ENCODE measurements at regions of chr19 and their contacts with region 1.

Region 1: GRCh38 chr19:12064590-12065538 is at the start of gene ZNF844:
- DNase-seq: peak; percentile 59 to 83 (median 69)
- ATAC-seq: peak; percentile 84
- H3K4me3 ChIP-seq: peak within 1 kb of the TSS; percentile 66 to 71
- H3K4me3 Mint-ChIP-seq: peak within 1 kb of the TSS; percentile 89
- H3K27ac ChIP-seq: peak within 1 kb of the TSS; percentile 69 to 71
- H3K27ac Mint-ChIP-seq: peak within 1 kb of the TSS; percentile 82
- H3K4me1 ChIP-seq: peaks cover 8% of the 10 kb centered on the region
- H3K4me1 Mint-ChIP-seq: peaks cover 11% of the 10 kb centered on the region
- H3K27me3 ChIP-seq: no peaks in the 10 kb centered on the region
- H3K27me3 Mint-ChIP-seq: no peaks in the 10 kb centered on the region
- CTCF ChIP-seq: no peak
- total RNA-seq, gene ZNF844: 12.1 to 14.6 TPM

Region 2: DNA sequence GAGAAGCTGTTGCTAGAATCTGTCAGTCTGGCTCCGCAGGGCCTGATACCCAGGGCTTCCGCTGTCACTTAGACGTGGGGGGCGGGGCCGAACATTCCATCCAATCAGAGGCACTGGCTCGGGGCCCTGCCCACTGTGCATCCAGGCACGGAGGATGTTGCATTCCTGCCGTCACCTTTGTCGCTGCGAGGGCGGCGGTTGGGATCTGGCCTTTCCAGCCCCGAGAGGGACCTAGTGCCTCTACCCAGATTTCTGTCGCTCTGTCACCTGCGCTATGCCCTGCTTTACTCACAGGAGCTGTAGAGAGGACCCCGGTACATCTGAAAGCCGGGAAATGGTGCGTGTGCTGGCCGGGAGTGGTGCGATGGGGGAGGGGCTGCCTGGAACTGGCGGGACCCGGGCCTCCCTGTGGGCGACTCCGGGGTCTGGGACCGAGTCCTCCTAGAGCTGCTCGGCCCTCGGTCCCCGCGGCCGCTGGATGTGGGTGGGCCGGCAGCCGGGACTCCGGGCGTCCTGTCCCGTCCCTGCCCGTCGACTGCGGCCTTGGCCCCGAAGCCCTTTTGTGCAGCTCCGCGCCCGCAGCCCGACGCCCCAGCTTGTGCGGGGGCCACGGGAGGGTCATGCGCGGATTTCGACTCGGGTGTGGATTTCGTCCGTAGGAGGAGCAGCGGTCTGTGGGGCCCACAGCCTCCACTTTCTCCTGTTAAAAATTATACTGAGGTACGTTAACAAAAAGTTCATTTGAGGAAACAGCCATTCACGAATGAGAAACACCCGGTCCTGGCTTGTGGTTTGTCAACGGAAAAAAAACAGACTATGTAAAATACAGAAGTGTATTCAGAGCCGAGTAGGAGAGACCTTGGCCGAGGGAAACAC is 216.0 kb before region 1 on chr19 and contains the start of gene ZNF439:
- CTCF ChIA-PET with region 1: no interaction called
- POLR2A ChIA-PET with region 1: no interaction called
- intact Hi-C with region 1: no loop called
- DNase-seq: peak; percentile 76 to 93 (median 89)
- ATAC-seq: peak; percentile 100
- H3K4me3 ChIP-seq: peak within 1 kb of the TSS; percentile 67 to 78
- H3K4me3 Mint-ChIP-seq: peak within 1 kb of the TSS; percentile 94
- H3K27ac ChIP-seq: peak within 1 kb of the TSS; percentile 55 to 64
- H3K27ac Mint-ChIP-seq: peak within 1 kb of the TSS; percentile 88
- H3K4me1 ChIP-seq: peaks cover 11% of the 10 kb centered on the region
- H3K4me1 Mint-ChIP-seq: peaks cover 24% of the 10 kb centered on the region
- H3K27me3 ChIP-seq: no peaks in the 10 kb centered on the region
- H3K27me3 Mint-ChIP-seq: no peaks in the 10 kb centered on the region
- CTCF ChIP-seq: no peak
- total RNA-seq, gene ZNF439: 6.2 to 7.9 TPM

Region 3: DNA sequence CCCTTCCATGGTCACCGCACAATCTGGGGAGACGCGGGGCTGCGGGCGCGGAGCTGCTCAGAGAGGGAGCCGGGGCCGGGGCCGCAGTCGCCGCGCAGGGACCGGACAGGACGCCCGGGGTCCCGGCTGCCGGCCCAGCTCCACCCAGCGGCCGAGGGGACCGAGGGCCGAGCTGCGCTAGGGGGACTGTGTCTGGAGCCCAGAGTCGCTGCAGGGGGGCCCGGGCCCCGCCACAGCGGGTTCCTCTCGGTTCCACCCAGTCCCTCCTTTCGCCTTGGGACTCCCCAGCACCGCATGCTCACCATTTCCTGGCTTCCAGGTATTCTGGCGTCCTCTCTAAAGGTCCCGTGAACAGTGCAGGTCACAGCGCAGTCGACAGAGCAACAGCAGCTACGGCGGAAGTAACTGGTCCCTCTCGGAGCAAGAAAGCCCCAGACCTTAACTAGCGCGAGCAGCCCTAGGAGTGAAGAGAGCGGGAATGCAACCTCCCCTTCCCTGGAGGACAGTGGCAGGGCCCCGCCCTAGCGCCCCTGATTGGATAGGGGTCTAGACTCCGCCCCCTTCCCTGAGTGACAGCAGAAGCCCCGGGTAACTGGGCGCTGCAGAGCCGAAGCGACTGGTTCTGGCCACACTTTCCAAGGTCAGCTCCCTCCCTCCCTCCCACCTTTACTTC is 12.2 kb before region 1 on chr19 and contains the start of gene ZNF878:
- CTCF ChIA-PET with region 1: interaction called, 15 read pairs
- POLR2A ChIA-PET with region 1: no interaction called
- intact Hi-C with region 1: no loop called
- DNase-seq: peak in 8 of 9 experiments; percentile 19 to 65 (median 42)
- ATAC-seq: peak; percentile 72
- H3K4me3 ChIP-seq: peak within 1 kb of the TSS; percentile 59 to 75
- H3K4me3 Mint-ChIP-seq: peak within 1 kb of the TSS; percentile 84
- H3K27ac ChIP-seq: no peak within 1 kb of the TSS
- H3K27ac Mint-ChIP-seq: peak within 1 kb of the TSS; percentile 37
- H3K4me1 ChIP-seq: peaks cover 10% of the 10 kb centered on the region
- H3K4me1 Mint-ChIP-seq: peaks cover 15% of the 10 kb centered on the region
- H3K27me3 ChIP-seq: no peaks in the 10 kb centered on the region
- H3K27me3 Mint-ChIP-seq: peaks cover 12% of the 10 kb centered on the region
- CTCF ChIP-seq: no peak
- total RNA-seq, gene ZNF878: not detected

Region 4: DNA sequence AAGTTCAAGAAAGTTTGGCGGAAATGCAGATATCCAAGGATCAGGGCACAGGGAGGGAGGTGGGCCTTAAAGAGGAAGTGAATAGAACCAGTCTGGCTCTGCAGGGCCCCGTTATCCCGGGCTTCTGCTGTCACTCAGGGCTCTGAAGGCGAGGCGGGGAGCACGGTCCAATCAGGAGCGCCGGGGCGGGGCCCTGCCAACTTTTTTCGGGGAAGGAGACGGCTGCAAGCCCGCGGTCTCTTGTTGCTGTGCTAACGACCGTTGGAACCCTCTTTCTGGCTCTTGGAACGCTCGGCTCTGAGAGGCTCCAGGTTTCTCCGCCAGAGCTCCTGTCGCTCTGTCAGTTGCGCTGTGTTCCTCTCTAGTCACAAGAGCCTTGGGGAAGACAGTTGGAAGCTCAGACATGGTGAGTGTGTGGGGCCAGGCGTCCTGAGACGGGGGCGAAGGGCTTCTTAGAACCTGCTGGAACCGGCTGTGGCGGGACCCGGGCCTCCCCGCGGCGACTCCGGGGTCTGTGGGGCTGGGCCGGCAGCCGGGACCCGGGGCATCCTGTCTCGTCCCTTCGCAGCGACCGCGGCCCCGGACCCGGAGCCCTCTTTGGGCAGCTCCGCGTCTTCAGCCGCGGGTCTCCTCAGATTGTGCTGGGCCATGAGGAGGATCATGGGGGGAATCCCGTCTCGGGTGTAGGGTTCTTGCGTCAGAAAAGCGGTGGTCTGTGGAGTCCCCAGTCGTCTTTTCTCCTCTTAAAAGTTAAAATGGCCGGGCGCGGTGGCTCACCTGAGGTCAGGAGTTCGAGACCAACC is 27.4 kb after region 1 on chr19:
- CTCF ChIA-PET with region 1: interaction called, 10 read pairs
- POLR2A ChIA-PET with region 1: no interaction called
- intact Hi-C with region 1: no loop called
- DNase-seq: peak in 8 of 9 experiments; percentile 15 to 70 (median 42)
- ATAC-seq: peak; percentile 72
- H3K4me3 ChIP-seq: peak overlapping the region; percentile 37 to 55
- H3K4me3 Mint-ChIP-seq: peak overlapping the region; percentile 77
- H3K27ac ChIP-seq: no peak overlapping the region
- H3K27ac Mint-ChIP-seq: no peak overlapping the region
- H3K4me1 ChIP-seq: peaks cover 11% of the 10 kb centered on the region
- H3K4me1 Mint-ChIP-seq: peaks cover 13% of the 10 kb centered on the region
- H3K27me3 ChIP-seq: peaks cover 0 to 2% of the 10 kb centered on the region in 2 experiments
- H3K27me3 Mint-ChIP-seq: peaks cover 10% of the 10 kb centered on the region
- CTCF ChIP-seq: no peak

Region 5: DNA sequence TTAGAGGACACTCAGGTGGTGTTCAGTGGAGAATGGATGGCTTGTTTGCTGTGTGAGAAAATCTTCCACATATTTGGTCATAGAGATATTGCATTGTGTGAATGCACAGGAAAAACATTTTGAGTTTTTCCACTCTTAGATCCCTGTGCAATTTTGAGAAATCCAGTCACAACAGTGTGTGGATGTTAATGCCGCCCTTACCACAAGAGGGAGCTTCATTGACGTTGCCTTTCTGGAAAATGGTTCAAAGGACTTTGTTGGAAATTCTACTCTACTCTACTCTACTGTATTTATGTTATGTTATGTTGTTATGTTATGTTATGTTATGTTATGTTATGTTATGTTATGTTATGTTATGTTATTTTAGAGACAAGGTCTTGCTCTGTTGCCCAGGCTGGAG is 61.8 kb after region 1 on chr19:
- CTCF ChIA-PET with region 1: interaction called, 11 read pairs
- POLR2A ChIA-PET with region 1: no interaction called
- intact Hi-C with region 1: no loop called
- DNase-seq: peak in 4 of 9 experiments; percentile 6 to 37 (median 24)
- ATAC-seq: no peak
- H3K4me3 ChIP-seq: no peak overlapping the region
- H3K4me3 Mint-ChIP-seq: no peak overlapping the region
- H3K27ac ChIP-seq: no peak overlapping the region
- H3K27ac Mint-ChIP-seq: no peak overlapping the region
- H3K4me1 ChIP-seq: no peaks in the 10 kb centered on the region
- H3K4me1 Mint-ChIP-seq: peaks cover 2% of the 10 kb centered on the region
- H3K27me3 ChIP-seq: no peaks in the 10 kb centered on the region
- H3K27me3 Mint-ChIP-seq: no peaks in the 10 kb centered on the region
- CTCF ChIP-seq: peak; percentile 48

Region 6: DNA sequence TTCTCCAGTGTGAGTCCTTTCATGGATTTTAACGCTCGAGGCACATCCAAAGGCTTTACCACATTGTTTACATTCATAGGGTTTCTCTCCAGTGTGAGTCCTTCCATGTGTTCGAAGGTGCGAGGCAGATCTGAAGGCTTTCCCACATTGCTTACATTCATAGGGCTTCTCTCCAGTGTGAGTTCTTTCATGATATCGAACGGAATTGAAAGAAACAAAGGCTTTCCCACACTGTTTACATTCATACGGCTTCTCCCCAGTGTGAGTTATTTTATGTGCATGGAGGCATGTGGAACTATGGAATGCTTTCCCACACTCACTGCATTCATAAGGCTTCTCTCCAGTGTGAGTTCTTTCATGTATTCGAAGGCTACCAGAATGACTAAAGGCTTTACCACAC is 80.5 kb after region 1 on chr19:
- CTCF ChIA-PET with region 1: interaction called, 49 read pairs
- POLR2A ChIA-PET with region 1: interaction called, 3 read pairs
- intact Hi-C with region 1: no loop called
- DNase-seq: no peak
- ATAC-seq: no peak
- H3K4me3 ChIP-seq: no peak overlapping the region
- H3K4me3 Mint-ChIP-seq: no peak overlapping the region
- H3K27ac ChIP-seq: no peak overlapping the region
- H3K27ac Mint-ChIP-seq: no peak overlapping the region
- H3K4me1 ChIP-seq: peaks cover 11% of the 10 kb centered on the region
- H3K4me1 Mint-ChIP-seq: peaks cover 11% of the 10 kb centered on the region
- H3K27me3 ChIP-seq: no peaks in the 10 kb centered on the region
- H3K27me3 Mint-ChIP-seq: no peaks in the 10 kb centered on the region
- CTCF ChIP-seq: no peak

Region 7: GRCh38 chr19:12162882-12163806 is 98.3 kb after region 1 on chr19 and contains the start of gene ZNF136:
- CTCF ChIA-PET with region 1: interaction called, 11 read pairs
- POLR2A ChIA-PET with region 1: interaction called, 3 read pairs
- intact Hi-C with region 1: no loop called
- DNase-seq: peak; percentile 84 to 97 (median 91)
- ATAC-seq: peak; percentile 99
- H3K4me3 ChIP-seq: peak within 1 kb of the TSS; percentile 83 to 86
- H3K4me3 Mint-ChIP-seq: peak within 1 kb of the TSS; percentile 96
- H3K27ac ChIP-seq: peak within 1 kb of the TSS; percentile 93 to 96
- H3K27ac Mint-ChIP-seq: peak within 1 kb of the TSS; percentile 98
- H3K4me1 ChIP-seq: peaks cover 25% of the 10 kb centered on the region
- H3K4me1 Mint-ChIP-seq: peaks cover 46% of the 10 kb centered on the region
- H3K27me3 ChIP-seq: no peaks in the 10 kb centered on the region
- H3K27me3 Mint-ChIP-seq: no peaks in the 10 kb centered on the region
- CTCF ChIP-seq: no peak
- total RNA-seq, gene ZNF136: 41.7 to 42.1 TPM

Measured in CD8-positive, alpha-beta T cell (primary cell).